SK-N-SH (cell line): ENCODE measurements at regions of chr17 and their contacts with region 1.

Region 1: GRCh38 chr17:76414334-76415295 is 30.2 kb downstream of the SPHK1 start:
- DNase-seq: peak; percentile 94
- H3K4me3 ChIP-seq: no peak overlapping the region
- H3K27ac ChIP-seq: peak overlapping the region in 1 of 2 experiments; percentile 77; a peak in 2 of 4 replicates
- H3K4me1 ChIP-seq: peaks cover 0 to 44% of the 10 kb centered on the region in 2 experiments; a peak in 2 of 4 replicates
- H3K27me3 ChIP-seq: no peaks in the 10 kb centered on the region
- CTCF ChIP-seq: no peak
- EP300 ChIP-seq: peak in 1 of 2 experiments; percentile 78; a peak in 1 of 4 replicates
- RAD21 ChIP-seq: peak; percentile 24; the same call in 1 of the 2 replicates

Region 2: DNA sequence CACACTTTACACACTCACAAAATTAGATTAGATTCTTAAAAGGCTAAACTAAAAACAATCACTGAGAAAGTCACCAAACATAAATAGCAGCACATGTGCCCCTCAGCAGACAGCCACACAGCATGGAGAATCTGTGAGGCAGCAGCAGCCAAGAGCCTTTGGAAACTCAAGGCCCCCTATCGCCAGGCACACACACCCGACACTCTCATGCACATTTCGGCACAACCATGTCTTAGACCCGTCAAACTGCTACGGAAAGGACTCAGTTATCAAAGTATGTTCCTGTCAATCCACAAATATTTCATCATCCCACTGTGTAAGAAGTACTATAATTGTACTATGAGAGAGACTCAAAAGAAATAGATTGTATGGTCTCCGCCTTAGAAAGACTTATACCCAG is 17.4 kb after region 1 on chr17:
- CTCF ChIA-PET with region 1: interaction called, 40 read pairs
- POLR2A ChIA-PET with region 1: no interaction called
- DNase-seq: no peak
- H3K4me3 ChIP-seq: no peak overlapping the region
- H3K27ac ChIP-seq: no peak overlapping the region
- H3K4me1 ChIP-seq: peaks cover 9 to 10% of the 10 kb centered on the region in 2 experiments; a peak in 2 of 4 replicates
- H3K27me3 ChIP-seq: no peaks in the 10 kb centered on the region
- CTCF ChIP-seq: no peak
- EP300 ChIP-seq: no peak
- RAD21 ChIP-seq: no peak

Region 3: DNA sequence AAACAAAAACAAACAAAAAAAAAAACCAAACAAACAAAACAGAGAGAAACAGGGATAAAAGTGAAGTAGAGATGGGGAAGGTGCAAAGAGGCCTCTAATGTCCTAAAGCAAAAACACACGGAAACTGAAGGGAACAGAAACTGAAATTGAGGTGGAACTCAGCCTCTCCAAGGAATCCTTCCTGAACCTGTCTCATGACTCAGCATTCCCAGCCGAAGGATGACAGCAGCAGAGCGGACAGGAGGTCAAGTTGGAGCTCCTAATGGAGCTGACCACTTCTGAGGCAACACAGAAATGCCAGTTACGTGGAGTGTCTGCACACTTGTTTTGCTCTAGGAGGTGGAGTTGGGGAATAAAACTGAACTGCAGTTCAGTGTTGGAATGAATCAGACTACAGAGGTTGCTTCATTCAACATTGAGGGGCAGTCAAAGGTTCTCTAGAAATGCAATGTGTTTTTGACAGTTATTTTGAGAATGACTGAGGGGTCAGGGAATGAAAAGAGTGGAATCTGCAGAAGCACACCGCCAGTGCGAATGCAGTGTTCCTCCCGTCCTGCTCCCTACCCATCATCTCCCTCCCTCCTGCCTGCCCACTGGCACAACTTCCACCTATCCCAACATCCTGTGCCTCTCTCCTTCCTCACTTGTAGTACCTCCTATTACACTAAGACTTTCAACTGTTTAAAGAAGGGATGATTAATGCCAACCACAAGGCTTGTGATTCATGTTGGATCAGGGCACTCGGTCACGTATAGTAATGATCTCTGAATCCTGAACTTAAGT is 32.0 kb after region 1 on chr17:
- CTCF ChIA-PET with region 1: interaction called, 89 read pairs
- POLR2A ChIA-PET with region 1: interaction called, 7 read pairs
- DNase-seq: no peak
- H3K4me3 ChIP-seq: peak overlapping the region in 1 of 2 experiments; percentile 34; a peak in 3 of 4 replicates
- H3K27ac ChIP-seq: peak overlapping the region; percentile 4 to 64
- H3K4me1 ChIP-seq: peaks cover 42 to 45% of the 10 kb centered on the region in 2 experiments
- H3K27me3 ChIP-seq: no peaks in the 10 kb centered on the region
- CTCF ChIP-seq: no peak
- EP300 ChIP-seq: no peak
- RAD21 ChIP-seq: no peak

Region 4: GRCh38 chr17:76458580-76459490 is 44.2 kb after region 1 on chr17:
- CTCF ChIA-PET with region 1: interaction called, 134 read pairs
- POLR2A ChIA-PET with region 1: interaction called, 4 read pairs
- DNase-seq: peak; percentile 79
- H3K4me3 ChIP-seq: no peak overlapping the region
- H3K27ac ChIP-seq: no peak overlapping the region
- H3K4me1 ChIP-seq: no peaks in the 10 kb centered on the region; a peak in 1 of 4 replicates
- H3K27me3 ChIP-seq: no peaks in the 10 kb centered on the region
- CTCF ChIP-seq: peak; percentile 51
- EP300 ChIP-seq: no peak
- RAD21 ChIP-seq: peak; percentile 81

Region 5: GRCh38 chr17:76481071-76481655 is 66.5 kb after region 1 on chr17:
- CTCF ChIA-PET with region 1: no interaction called
- POLR2A ChIA-PET with region 1: no interaction called
- DNase-seq: no peak
- H3K4me3 ChIP-seq: no peak overlapping the region
- H3K27ac ChIP-seq: no peak overlapping the region
- H3K4me1 ChIP-seq: no peaks in the 10 kb centered on the region
- H3K27me3 ChIP-seq: no peaks in the 10 kb centered on the region
- CTCF ChIP-seq: no peak
- EP300 ChIP-seq: no peak
- RAD21 ChIP-seq: no peak

Region 6: GRCh38 chr17:76506408-76507349 is 92.1 kb after region 1 on chr17:
- CTCF ChIA-PET with region 1: interaction called, 242 read pairs
- POLR2A ChIA-PET with region 1: no interaction called
- DNase-seq: peak; percentile 95
- H3K4me3 ChIP-seq: no peak overlapping the region; a peak in 1 of 4 replicates
- H3K27ac ChIP-seq: no peak overlapping the region
- H3K4me1 ChIP-seq: peaks cover 0 to 14% of the 10 kb centered on the region in 2 experiments; a peak in 1 of 4 replicates
- H3K27me3 ChIP-seq: peaks cover 9% of the 10 kb centered on the region
- CTCF ChIP-seq: peak; percentile 96
- EP300 ChIP-seq: no peak
- RAD21 ChIP-seq: peak; percentile 99